ENCODE measurements at regions of chr20 and their contacts with region 1.

Region 1: GRCh38 chr20:1466211-1467081 is at the start of gene NSFL1C:
- DNase-seq: peak; percentile 78 to 97
- H3K4me3 ChIP-seq: peak within 1 kb of the TSS; percentile 67 to 81
- H3K27ac ChIP-seq: peak within 1 kb of the TSS; percentile 80
- H3K4me1 ChIP-seq: peaks cover 14 to 35% of the 10 kb centered on the region in 2 donors
- H3K27me3 ChIP-seq: no peaks in the 10 kb centered on the region
- CTCF ChIP-seq: peak; percentile 95 to 97 (median 95)
- total RNA-seq, gene NSFL1C: 58.5 TPM

Region 2: GRCh38 chr20:833450-834150 is 632.8 kb before region 1 on chr20 and contains the start of gene FAM110A:
- intact Hi-C with region 1: loop called (anchors 5 kb)
- DNase-seq: peak; percentile 87 to 97
- H3K4me3 ChIP-seq: peak within 1 kb of the TSS; percentile 90
- H3K27ac ChIP-seq: peak within 1 kb of the TSS; percentile 72 to 78
- H3K4me1 ChIP-seq: peaks cover 4 to 17% of the 10 kb centered on the region in 2 donors
- H3K27me3 ChIP-seq: no peaks in the 10 kb centered on the region
- CTCF ChIP-seq: no peak
- total RNA-seq, gene FAM110A: 9.7 TPM

Region 3: GRCh38 chr20:1204113-1204512 is 262.3 kb before region 1 on chr20:
- intact Hi-C with region 1: no loop called
- DNase-seq: no peak
- H3K4me3 ChIP-seq: no peak overlapping the region
- H3K27ac ChIP-seq: no peak overlapping the region
- H3K4me1 ChIP-seq: no peaks in the 10 kb centered on the region
- H3K27me3 ChIP-seq: no peaks in the 10 kb centered on the region
- CTCF ChIP-seq: no peak

Region 4: GRCh38 chr20:1313236-1313964 is 153.0 kb before region 1 on chr20:
- intact Hi-C with region 1: loop called (anchors 2 kb)
- DNase-seq: peak in 1 of 2 donors; percentile 89
- H3K4me3 ChIP-seq: peak overlapping the region; percentile 24 to 51
- H3K27ac ChIP-seq: no peak overlapping the region
- H3K4me1 ChIP-seq: peaks cover 0 to 3% of the 10 kb centered on the region in 2 donors
- H3K27me3 ChIP-seq: no peaks in the 10 kb centered on the region
- CTCF ChIP-seq: peak; percentile 92 to 99 (median 97)

Region 5: GRCh38 chr20:1802385-1803060 is 336.1 kb after region 1 on chr20:
- intact Hi-C with region 1: loop called (anchors 10 kb)
- DNase-seq: peak in 1 of 2 donors; percentile 83
- H3K4me3 ChIP-seq: peak overlapping the region; percentile 74 to 76
- H3K27ac ChIP-seq: peak overlapping the region; percentile 52 to 69
- H3K4me1 ChIP-seq: peaks cover 4 to 6% of the 10 kb centered on the region in 2 donors
- H3K27me3 ChIP-seq: no peaks in the 10 kb centered on the region
- CTCF ChIP-seq: peak; percentile 65 to 87 (median 67)

Region 6: GRCh38 chr20:2470423-2471193 is 1004.2 kb after region 1 on chr20 and contains the start of gene SNRPB:
- intact Hi-C with region 1: loop called (anchors 10 kb)
- DNase-seq: peak; percentile 88 to 99
- H3K4me3 ChIP-seq: peak within 1 kb of the TSS; percentile 76 to 81
- H3K27ac ChIP-seq: peak within 1 kb of the TSS; percentile 94 to 96
- H3K4me1 ChIP-seq: peaks cover 4 to 18% of the 10 kb centered on the region in 2 donors
- H3K27me3 ChIP-seq: no peaks in the 10 kb centered on the region
- CTCF ChIP-seq: no peak
- total RNA-seq, gene SNRPB: 83.5 TPM

Measured in ascending aorta (tissue), 2 donors.